ENCODE measurements at regions of chr17 and their contacts with region 1.

Region 1: GRCh38 chr17:17919169-17920107 is 52.8 kb downstream of the TOM1L2 start:
- DNase-seq: peak; percentile 83
- H3K4me3 ChIP-seq: no peak overlapping the region
- H3K27ac ChIP-seq: peak overlapping the region; percentile 62 to 64
- H3K4me1 ChIP-seq: peaks cover 9% of the 10 kb centered on the region
- H3K27me3 ChIP-seq: no peaks in the 10 kb centered on the region
- CTCF ChIP-seq: peak; percentile 59 to 91 (median 78)
- POLR2A ChIP-seq: no peak

Region 2: DNA sequence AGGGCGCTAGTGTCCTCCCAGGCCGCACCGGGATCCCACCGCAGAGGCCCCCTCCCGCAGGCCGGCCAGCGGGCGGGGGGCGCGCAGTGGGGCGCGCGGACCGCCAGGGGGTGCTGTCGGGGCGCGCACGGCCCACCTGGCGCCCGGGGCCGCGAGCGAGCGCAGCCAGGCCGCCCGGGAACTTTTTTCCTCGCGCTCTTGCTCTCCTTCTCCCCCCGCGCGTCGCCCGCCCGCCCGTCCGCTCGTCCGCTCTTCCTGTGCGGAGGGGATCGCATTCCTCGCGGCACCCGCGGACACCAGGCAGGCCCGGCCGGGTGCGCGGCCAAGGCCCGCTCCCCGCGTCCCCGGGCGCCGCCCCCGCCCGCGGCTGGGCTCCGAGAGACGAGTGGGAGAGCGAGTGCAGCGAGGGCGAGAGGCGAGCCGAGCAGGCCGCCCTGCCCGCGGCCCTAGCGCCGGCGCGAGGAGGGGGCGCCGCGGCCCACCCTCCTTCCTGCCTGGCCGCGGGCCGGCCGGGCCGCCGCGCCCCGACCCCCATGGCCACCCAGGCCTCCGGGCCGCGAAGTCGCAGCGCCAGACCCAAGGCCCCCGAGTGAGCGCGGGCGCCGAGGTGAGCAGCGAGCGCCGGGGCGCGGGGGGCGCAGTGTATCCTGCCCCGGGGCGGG is 238.1 kb before region 1 on chr17 and contains the start of gene RAI1:
- intact Hi-C with region 1: loop called (anchors 5 kb)
- DNase-seq: peak; percentile 78
- H3K4me3 ChIP-seq: peak within 1 kb of the TSS; percentile 77 to 82
- H3K27ac ChIP-seq: peak within 1 kb of the TSS; percentile 94 to 99
- H3K4me1 ChIP-seq: peaks cover 30% of the 10 kb centered on the region
- H3K27me3 ChIP-seq: no peaks in the 10 kb centered on the region
- CTCF ChIP-seq: peak; percentile 72 to 99 (median 92)
- POLR2A ChIP-seq: peak; percentile 46
- total RNA-seq, gene RAI1: 69.2 to 71.0 TPM

Region 3: DNA sequence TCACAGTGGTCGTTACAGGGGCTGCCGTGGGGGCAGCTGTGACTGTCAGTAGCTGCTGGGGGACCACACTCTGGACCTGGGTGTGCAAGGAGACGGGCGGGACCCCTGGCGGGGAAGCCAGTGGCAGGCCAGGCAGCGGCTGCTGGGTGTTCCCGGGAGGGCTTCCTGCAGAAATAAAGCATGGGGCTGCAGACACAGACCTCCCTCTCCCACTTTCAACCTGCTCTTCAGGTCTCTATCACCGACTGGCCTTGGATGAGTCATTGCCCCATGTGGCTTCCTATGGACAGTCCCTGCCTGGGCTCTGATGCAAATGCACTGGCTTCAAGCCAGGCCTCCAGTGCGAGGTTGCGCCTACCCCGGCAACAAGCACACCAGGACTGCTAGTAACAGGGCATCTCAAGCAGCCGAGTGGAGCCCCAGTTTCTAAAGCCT is 99.9 kb before region 1 on chr17:
- intact Hi-C with region 1: loop called (anchors 5 kb)
- DNase-seq: peak; percentile 66
- H3K4me3 ChIP-seq: no peak overlapping the region
- H3K27ac ChIP-seq: peak overlapping the region; percentile 90 to 94
- H3K4me1 ChIP-seq: peaks cover 60% of the 10 kb centered on the region
- H3K27me3 ChIP-seq: no peaks in the 10 kb centered on the region
- CTCF ChIP-seq: no peak
- POLR2A ChIP-seq: no peak

Region 4: DNA sequence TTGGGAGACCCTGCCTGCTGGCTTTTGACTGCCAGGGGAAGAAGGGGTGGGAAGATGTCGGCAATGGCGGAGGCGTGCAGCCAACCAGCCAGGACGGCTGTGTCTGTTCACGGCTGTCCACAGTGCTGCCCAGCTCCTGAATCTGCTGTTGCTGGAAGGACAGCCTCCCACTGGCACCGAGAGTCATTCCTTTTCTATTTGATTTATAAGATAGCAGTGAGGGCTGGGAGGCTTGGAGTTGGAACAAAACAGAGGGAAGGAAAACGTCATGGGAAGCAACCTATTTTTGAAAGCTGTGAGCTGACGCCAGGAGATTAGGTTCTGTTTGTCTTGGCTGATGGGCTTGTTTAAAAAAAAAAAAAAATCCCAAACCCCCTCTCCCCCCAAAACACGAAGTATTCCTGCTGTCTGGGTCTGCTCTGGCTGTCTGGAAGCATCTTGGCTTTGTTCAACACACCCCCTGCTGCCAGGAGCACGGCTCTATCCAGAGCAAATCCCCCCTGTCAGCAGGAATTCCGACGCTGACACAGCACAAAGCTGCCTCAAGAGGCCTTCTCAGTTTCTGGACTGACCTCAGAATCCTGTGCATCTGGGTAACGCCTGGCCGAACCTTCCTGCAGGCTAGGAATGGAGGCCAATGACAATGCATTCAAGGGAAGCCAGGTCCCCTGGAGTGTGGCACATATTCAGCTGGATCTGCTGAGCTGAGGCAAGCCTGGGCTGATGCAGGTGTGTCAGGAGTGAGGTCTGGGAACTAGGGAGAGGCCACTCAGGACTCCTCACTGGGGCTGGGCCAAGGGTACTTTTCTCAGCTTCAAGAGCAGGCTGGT is 41.7 kb before region 1 on chr17:
- intact Hi-C with region 1: loop called (anchors 5 kb)
- DNase-seq: peak; percentile 87
- H3K4me3 ChIP-seq: no peak overlapping the region
- H3K27ac ChIP-seq: peak overlapping the region; percentile 86 to 90
- H3K4me1 ChIP-seq: peaks cover 29% of the 10 kb centered on the region
- H3K27me3 ChIP-seq: no peaks in the 10 kb centered on the region
- CTCF ChIP-seq: peak in 1 of 4 experiments; percentile 11
- POLR2A ChIP-seq: no peak

Region 5: DNA sequence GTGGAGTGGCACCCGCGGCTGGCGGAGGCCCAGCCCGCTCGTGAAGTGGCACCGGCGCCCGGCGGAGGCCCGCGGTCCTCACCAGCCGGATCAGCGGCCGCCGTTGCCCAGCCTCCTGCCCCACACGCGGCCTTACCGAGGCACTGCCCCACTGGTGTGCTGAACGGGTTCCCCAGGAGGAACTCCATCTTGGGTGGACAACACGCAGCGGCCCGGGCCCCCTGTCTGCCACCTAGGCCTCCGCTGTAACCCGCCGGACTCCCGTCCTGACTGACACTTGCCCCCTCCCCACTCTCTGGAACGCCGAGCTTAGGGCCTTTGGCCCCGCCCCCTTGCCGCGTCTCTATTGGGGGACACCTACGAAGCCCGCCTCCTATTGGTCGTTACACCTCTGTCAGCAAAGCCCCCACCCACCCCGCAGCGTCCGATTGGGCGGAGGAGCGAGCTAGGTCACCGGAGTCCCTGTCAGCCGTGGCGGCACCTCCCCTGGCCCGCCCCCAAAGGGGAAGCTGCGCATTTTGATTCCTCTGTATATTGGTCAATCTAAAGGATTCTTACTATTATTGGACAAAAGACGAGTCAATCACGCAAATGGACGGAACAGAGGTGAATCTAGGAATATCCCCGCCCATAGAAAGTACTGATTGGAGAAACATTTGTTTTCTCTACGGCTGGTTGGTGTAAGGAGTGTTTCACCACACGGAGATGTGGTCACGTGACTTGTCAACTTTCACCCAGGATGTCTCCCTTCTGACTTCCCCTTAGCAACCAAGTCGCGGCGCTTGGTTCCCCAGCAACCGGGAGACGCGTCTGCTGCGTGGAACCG is 52.9 kb after region 1 on chr17 and contains the starts of genes DRC3 and TOM1L2:
- intact Hi-C with region 1: no loop called
- DNase-seq: peak; percentile 100
- H3K4me3 ChIP-seq: peak within 1 kb of the TSS; percentile 93 to 95
- H3K27ac ChIP-seq: peak within 1 kb of the TSS; percentile 91 to 95
- H3K4me1 ChIP-seq: no peaks in the 10 kb centered on the region
- H3K27me3 ChIP-seq: no peaks in the 10 kb centered on the region
- CTCF ChIP-seq: peak; percentile 40 to 64 (median 50)
- POLR2A ChIP-seq: peak; percentile 98
- total RNA-seq, gene DRC3: 4.5 to 10.0 TPM
- total RNA-seq, gene TOM1L2: 162 to 185 TPM

Region 6: DNA sequence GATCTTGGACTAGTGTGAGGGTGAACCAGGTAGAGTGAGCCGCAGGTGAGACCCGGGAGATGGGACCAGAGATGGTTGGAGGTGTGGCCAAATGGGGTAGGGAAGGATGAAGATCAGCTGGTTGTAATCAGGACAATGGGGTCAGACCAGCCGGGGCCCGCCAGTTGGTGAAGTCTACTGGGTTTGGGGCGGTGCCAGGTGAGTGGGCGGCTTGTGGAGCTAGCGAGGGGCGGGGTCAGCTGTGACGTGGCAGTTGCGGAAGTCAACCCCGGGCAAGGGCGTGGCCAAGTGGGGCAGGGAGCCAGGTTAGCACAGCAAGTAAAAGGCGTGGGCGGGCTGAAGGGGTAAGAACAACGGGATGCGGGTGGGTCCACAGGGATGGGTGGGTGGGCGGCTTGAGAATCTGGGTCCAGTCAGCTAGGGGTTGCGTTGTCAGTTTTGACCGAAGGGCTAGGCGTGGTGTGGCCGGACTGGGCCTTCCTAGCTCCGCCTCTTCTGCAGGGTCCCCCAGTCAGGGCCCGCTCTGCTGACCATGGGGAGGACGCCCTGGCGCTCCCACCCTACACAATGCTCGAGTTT is 238.7 kb after region 1 on chr17:
- intact Hi-C with region 1: no loop called
- DNase-seq: peak; percentile 93
- H3K4me3 ChIP-seq: peak overlapping the region; percentile 30 to 41
- H3K27ac ChIP-seq: peak overlapping the region; percentile 16 to 39
- H3K4me1 ChIP-seq: no peaks in the 10 kb centered on the region
- H3K27me3 ChIP-seq: no peaks in the 10 kb centered on the region
- CTCF ChIP-seq: no peak
- POLR2A ChIP-seq: no peak